ENCODE measurements at regions of chr6 and their contacts with region 1.

Region 1: DNA sequence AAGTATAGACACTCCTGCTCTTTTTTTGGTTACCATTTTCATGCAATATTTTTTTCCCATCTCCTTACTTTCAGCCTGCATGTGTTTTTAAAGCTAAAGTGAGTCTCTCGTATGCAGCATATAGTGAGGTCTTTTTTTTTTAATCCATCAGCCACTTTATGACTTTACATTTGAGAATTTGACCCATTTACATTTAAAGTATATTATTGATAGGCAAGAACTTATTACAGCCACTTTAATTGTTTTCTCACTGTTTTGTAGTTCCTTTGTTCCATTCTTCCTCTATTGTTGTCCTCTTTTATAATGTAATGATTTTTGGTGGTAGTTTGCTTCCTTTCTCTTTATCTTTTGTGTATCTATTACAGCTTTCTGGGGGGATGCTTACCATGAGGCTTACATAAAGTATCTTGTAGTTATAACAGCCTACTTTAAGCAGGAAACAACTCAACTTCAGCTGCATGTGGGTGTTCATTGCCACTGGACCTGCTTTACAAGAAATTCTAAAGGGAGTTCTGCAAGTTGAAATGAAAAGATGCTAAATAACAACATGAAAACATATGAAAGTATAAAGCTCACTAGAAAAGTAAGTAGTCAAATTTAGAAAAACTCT is 71.8 kb downstream of the TNFAIP3 start:
- DNase-seq: no peak
- H3K4me3 Mint-ChIP-seq: no peak overlapping the region
- H3K27ac Mint-ChIP-seq: no peak overlapping the region
- H3K4me1 Mint-ChIP-seq: peaks cover 20% of the 10 kb centered on the region
- H3K27me3 Mint-ChIP-seq: no peaks in the 10 kb centered on the region

Region 2: GRCh38 chr6:137443901-137444300 is 495.0 kb before region 1 on chr6:
- CTCF ChIA-PET with region 1: no interaction called
- POLR2A ChIA-PET with region 1: no interaction called
- DNase-seq: no peak
- H3K4me3 Mint-ChIP-seq: no peak overlapping the region
- H3K27ac Mint-ChIP-seq: no peak overlapping the region
- H3K4me1 Mint-ChIP-seq: peaks cover 8% of the 10 kb centered on the region
- H3K27me3 Mint-ChIP-seq: peaks cover 14% of the 10 kb centered on the region

Region 3: DNA sequence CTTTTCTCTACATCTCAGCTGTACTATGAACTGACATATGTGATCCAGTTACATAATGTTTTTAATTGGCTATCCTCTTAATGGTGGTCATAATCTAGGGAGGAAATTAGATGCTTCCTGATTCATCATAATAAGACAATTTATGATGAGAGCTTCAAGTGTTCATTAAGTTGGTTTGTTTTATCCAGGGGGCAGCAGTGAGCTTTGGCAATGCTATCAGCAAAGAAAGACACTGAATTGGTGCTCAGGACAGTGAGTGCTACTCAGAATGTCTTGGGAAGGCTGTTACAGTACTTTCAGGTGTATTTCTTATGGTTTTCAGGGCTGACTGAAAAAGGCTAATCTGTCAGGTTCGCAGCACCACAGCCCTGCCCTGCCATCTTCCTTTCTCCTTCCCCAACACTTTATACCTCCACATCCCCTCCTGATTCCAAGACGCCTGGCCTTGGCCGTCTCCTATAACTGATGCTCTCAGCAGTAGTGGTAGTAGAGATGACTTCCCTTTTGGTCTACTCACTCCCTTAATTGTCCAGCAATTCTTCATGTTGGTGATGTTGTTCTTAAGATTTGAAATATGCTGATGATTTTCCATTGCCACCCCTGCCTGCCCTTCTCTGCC is 138.8 kb before region 1 on chr6:
- CTCF ChIA-PET with region 1: interaction called, 11 read pairs
- POLR2A ChIA-PET with region 1: no interaction called
- DNase-seq: peak; percentile 75
- H3K4me3 Mint-ChIP-seq: no peak overlapping the region
- H3K27ac Mint-ChIP-seq: peak overlapping the region; percentile 46
- H3K4me1 Mint-ChIP-seq: peaks cover 65% of the 10 kb centered on the region
- H3K27me3 Mint-ChIP-seq: no peaks in the 10 kb centered on the region

Region 4: DNA sequence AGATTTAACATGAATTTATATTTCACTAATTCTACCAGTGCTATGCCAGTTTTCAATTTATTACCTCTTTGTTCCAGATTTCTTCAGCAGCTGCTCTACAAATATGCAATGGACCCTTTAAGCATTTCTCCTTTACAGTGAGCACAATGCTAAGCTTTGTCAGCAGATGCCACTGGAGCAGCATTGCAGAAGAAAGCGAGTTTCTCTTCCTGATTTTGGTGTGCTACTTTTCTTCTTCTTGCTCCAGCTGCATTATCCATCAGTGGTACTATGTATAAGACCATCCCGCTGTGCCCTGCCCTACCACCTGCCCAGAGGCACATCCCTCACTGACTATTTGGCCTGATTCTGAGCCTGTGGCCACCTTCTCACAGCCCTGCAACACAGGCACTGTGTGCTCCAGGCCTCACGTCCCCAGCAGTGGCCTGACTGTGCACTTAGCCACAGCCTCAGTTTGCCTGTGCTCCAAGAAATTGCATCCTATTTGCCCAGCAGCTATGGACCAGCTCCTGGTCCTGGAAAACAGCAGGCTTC is 12.3 kb after region 1 on chr6:
- CTCF ChIA-PET with region 1: interaction called, 16 read pairs
- POLR2A ChIA-PET with region 1: no interaction called
- DNase-seq: no peak
- H3K4me3 Mint-ChIP-seq: no peak overlapping the region
- H3K27ac Mint-ChIP-seq: peak overlapping the region; percentile 3
- H3K4me1 Mint-ChIP-seq: peaks cover 14% of the 10 kb centered on the region
- H3K27me3 Mint-ChIP-seq: peaks cover 5% of the 10 kb centered on the region

Measured in activated CD4-positive, alpha-beta T cell treated with anti-CD3 and anti-CD28 coated beads, Interleukin-2, amount 10 ng/mL, durations not matched to agents 7 days and 5 days (primary cell).